HEK293 (cell line): ENCODE measurements at regions of chr17 and their contacts with region 1.

Region 1: DNA sequence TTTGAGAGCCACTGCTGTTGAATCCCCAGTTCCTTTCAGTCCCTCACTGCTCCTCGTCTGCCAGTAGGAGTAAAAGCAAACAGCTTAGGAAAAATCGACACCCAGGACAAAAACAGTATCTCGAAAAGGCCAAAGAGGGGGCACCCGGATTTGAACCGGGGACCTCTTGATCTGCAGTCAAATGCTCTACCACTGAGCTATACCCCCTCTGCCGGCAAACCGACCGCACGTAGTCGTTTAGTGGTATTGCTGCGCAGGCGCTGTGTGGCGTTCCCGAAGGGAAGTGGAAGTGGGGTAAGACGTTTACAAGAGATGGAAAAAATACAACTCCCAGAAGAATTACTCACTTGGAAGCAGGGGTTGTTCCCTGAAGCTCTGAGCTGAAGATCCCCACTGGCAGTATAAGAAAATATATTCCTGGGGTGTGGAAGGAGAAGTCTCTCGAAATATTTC is 2.2 kb upstream of the PLXDC1 start:
- H3K4me3 ChIP-seq: peak overlapping the region; percentile 62
- H3K27ac ChIP-seq: peak overlapping the region; percentile 79
- H3K4me1 ChIP-seq: peaks cover 3% of the 10 kb centered on the region
- CTCF ChIP-seq: 0 out of 2 replicates have a peak, but pooled peaks have one; percentile 4

Region 2: GRCh38 chr17:38853292-38854219 is 300.1 kb before region 1 on chr17 and contains the start of gene RPL23:
- CTCF ChIA-PET with region 1: interaction called, 5 read pairs
- POLR2A ChIA-PET with region 1: interaction called, 11 read pairs
- H3K4me3 ChIP-seq: peak within 1 kb of the TSS; percentile 86
- H3K27ac ChIP-seq: peak within 1 kb of the TSS; percentile 99
- H3K4me1 ChIP-seq: peaks cover 3% of the 10 kb centered on the region
- CTCF ChIP-seq: no peak

Region 3: DNA sequence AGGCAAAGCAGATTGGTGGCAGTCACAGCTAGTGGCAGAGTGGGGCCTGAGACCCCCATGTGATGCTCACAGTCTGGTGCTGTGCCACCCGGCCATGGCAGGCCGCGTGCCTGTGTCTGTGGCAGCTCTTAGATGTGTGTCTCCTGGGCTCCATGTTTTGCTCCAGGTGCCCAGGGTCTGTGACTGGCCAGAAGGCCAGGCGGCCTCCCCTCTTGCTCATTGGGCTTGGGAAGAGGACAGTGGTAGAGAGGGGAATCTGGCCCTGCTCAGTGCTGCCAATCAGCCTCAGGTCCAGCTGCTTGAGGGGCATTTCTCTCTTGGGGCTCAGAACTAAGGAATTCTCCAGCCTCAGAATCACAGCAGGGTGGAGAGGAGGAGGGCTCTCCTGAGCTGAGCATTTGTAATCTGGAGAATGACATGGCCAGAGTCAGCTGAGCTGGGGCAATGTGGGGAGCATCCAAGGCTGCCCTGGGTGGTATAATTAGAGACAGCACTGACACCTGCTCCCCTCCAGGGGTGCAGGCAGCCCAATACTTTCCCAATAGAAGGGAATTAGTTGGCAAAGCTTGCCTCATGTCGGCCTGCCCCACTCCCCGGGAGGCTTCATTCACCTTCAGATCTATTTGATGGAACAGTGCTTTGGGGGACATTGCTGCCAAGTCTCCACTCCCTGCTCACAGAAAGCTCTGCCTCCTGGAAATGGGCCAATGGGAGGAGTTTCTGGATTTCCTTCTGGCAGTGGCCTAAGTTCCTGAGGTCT is 230.9 kb before region 1 on chr17:
- CTCF ChIA-PET with region 1: interaction called, 11 read pairs
- POLR2A ChIA-PET with region 1: no interaction called
- H3K4me3 ChIP-seq: no peak overlapping the region
- H3K27ac ChIP-seq: no peak overlapping the region
- H3K4me1 ChIP-seq: no peaks in the 10 kb centered on the region; the same call in 1 of the 2 replicates
- CTCF ChIP-seq: no peak

Region 4: GRCh38 chr17:39071573-39071972 is 82.1 kb before region 1 on chr17:
- CTCF ChIA-PET with region 1: interaction called, 12 read pairs
- POLR2A ChIA-PET with region 1: no interaction called
- H3K4me3 ChIP-seq: no peak overlapping the region
- H3K27ac ChIP-seq: no peak overlapping the region
- H3K4me1 ChIP-seq: no peaks in the 10 kb centered on the region
- CTCF ChIP-seq: no peak

Region 5: DNA sequence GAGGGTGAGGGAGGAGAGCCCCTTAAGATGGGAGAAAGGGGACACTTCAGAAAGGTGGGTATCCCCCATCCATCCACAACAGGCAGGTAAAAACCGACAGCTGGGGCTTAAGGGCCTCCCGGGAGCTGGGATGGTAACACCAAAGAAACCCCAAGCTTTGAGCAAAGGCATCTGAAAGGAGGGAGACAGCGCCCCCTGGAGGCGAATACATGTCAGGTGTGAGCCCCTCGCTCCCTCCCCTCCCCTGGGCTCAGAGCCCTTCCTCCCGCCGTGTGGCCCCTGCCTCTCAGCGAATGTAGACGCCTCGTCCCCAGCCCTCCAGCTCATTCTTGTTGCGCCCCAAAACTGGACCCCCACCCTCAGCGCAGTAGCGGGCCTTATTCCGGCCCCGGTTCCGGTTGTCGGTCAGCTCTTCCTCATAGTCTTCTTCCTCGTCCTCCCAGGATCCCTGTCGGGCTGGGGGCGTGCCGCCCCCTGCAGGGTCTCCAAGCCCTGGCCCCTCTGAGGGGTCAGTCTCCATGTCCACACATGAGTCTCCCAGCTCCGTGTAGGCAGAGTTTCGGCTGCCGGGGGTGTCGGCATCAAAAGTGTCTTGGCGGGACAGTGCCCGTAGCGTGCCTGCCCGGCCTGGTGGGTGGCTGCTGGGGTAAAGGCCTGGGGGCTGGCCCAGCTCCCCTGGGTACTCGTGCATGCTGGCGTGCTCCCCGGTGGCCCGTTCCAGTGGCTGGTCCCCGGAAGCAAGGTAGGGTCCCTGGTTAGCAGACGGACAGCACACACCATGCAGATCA is 21.5 kb after region 1 on chr17:
- CTCF ChIA-PET with region 1: interaction called, 36 read pairs
- POLR2A ChIA-PET with region 1: interaction called, 18 read pairs
- H3K4me3 ChIP-seq: no peak overlapping the region
- H3K27ac ChIP-seq: peak overlapping the region; percentile 11; the same call in 1 of the 2 replicates
- H3K4me1 ChIP-seq: 0 out of 2 replicates have a peak, but pooled peaks cover 7% of the 10 kb centered on the region
- CTCF ChIP-seq: peak; percentile 78

Region 6: DNA sequence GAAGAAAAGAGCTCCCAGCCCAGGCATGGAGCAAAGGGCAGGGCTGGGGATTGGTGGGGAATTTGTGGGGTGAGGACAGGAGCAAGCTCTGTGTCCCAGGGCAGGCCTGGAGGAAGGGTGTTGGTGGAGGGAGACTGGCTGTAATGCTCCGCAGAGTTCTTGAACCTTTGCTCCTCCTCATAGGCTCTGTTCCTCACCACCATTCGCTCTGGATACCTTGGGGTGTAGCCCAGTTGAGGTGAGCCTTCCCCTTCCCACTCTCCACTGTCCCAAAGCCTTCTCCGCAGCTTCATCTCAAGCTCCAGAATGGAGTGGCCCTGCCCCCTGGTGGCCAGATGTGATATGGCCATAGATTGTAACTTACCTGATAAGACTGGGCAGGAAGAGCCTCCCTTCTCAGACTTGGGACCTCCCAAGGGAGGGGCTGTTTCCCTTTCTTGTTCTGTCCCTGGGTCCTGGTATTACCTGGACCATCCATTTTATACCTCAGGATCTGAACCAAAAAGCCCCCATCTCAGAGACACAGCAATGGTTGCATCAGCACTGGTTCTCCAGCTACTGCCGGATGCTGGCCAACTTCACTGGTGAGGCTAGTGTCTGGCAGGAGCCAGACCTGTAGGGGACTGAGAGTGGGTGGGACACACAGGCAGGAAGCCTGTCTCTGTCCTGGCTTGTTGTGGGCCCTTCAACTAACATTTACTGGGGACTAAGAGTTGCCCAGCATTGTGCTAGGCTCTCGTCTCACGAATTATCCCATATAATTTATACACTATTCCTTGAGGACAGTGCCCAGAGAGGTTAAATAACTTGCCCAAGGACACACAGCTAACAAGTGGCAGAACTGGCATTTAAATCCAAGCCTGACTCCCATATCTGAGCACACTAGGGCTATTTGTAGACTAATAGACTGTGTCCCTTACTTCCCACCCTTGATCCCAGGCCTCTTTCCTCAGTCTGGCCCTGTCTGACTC is 91.3 kb after region 1 on chr17:
- CTCF ChIA-PET with region 1: interaction called, 18 read pairs
- POLR2A ChIA-PET with region 1: interaction called, 4 read pairs
- H3K4me3 ChIP-seq: no peak overlapping the region
- H3K27ac ChIP-seq: no peak overlapping the region
- H3K4me1 ChIP-seq: no peaks in the 10 kb centered on the region; the same call in 1 of the 2 replicates
- CTCF ChIP-seq: peak; percentile 91